A549 (cell line): ENCODE measurements at regions of chr12 and their contacts with region 1.

Region 1: GRCh38 chr12:120292661-120293531 is at the start of gene RNU4-1:
- DNase-seq: peak; percentile 59 to 96
- ATAC-seq: peak; percentile 57 to 66
- H3K4me3 ChIP-seq: peak within 1 kb of the TSS; percentile 55
- H3K27ac ChIP-seq: peak within 1 kb of the TSS; percentile 91 to 96
- H3K4me1 ChIP-seq: peaks cover 13% of the 10 kb centered on the region; the same call in 2 of the 3 replicates
- CTCF ChIP-seq: no peak; the same call in 2 of the 3 replicates
- EP300 ChIP-seq: no peak
- POLR2A ChIP-seq: peak; percentile 96
- RAD21 ChIP-seq: no peak; a peak in 1 of 5 replicates
- polyA plus RNA-seq, gene RNU4-1: not detected in 2 replicates

Region 2: DNA sequence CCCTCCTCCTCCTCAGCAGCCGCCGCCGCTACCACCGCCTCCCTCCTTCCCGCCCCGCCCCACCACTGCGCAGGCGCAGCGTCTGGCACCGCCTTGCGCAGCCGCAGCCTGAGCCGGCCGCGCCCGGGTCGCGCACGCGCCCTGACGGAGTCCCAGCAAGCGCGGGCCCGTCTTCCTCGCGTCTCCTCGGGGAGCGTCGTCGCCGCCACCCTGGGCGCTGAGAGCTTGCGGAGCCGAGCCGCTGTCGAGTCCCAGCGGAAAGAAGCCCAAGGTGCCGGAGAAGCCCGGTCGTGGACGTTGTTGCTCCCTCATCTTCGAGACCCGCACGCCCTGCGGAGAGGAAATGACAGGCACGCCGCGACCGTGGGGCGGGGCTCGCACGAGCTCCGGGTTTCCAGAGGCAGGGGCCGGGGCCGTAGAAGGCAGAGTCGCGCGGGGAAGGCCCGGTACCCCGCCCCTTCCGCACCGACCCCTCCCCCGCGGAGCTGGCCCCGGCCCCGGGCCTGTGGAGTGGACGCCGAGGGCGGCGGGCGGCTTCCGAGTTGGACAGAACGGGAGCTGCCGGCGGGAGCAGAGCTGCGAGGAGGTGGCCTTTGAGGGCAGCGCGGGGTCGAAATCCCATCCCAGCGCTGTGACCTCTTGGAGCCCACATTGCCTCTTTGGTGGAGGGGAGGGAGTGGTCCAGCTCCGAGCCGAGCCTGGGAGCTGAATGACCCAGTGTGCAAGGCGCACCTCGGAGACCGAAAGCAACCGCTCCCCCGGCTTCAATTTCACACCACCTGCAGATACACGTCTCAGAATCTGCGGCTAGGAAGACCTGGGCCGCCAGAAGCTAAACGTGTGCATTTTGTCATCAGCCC is 175.9 kb before region 1 on chr12:
- CTCF ChIA-PET with region 1: no interaction called
- POLR2A ChIA-PET with region 1: interaction called, 19 read pairs
- DNase-seq: peak; percentile 39 to 96
- ATAC-seq: peak; percentile 67 to 79
- H3K4me3 ChIP-seq: peak overlapping the region; percentile 96
- H3K27ac ChIP-seq: peak overlapping the region; percentile 95 to 97
- H3K4me1 ChIP-seq: peaks cover 33% of the 10 kb centered on the region
- CTCF ChIP-seq: no peak
- EP300 ChIP-seq: no peak
- POLR2A ChIP-seq: peak; percentile 90
- RAD21 ChIP-seq: no peak

Region 3: GRCh38 chr12:120142231-120142877 is 150.5 kb before region 1 on chr12:
- CTCF ChIA-PET with region 1: no interaction called
- POLR2A ChIA-PET with region 1: no interaction called
- DNase-seq: no peak
- ATAC-seq: peak in 1 of 2 experiments; percentile 18; a peak in 3 of 6 replicates
- H3K4me3 ChIP-seq: no peak overlapping the region
- H3K27ac ChIP-seq: no peak overlapping the region; a peak in 1 of 6 replicates
- H3K4me1 ChIP-seq: no peaks in the 10 kb centered on the region
- CTCF ChIP-seq: no peak
- EP300 ChIP-seq: no peak
- POLR2A ChIP-seq: no peak
- RAD21 ChIP-seq: no peak

Region 4: DNA sequence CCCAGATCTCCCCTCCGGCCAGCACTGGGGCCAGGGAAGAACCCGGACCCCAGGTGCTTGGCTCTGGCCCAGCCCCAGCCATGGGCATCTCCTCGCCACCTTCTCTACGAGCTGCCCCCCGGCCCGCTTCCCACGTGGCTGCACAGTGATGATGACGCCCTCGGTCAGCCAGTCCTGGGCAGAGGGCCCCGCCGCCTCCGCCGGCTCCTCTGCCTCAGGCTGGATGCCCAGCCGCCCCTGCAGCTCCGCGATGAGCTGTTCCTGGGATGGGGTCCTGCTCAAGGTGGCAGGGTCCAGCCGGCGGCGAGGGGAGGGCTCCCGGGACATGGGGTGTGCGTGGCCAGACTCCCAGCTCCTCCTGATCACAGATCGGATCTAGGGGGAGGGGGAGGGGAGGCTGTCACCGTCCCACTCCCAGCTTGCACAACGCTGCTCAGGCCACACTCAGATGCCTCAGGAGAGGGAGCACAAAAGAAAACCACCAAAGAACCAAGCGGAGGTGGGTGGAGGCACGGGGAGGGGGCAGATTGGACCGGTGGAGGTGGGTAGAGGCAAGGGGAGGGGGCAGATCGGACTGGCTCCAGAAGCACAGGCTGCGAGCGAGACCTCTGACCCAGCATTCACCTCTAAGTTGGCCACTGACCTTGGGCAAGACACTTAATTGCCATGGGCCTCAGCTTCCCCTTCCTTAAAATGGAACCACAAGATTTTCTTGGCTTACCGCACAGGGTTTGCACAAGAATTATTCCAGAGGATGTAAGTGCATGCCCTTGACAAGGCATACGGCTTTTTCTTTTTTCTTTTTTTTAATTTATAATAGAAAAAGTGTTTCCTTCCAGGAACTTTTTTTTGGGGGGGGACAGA is 75.9 kb before region 1 on chr12:
- CTCF ChIA-PET with region 1: no interaction called
- POLR2A ChIA-PET with region 1: interaction called, 13 read pairs
- DNase-seq: no peak
- ATAC-seq: no peak; a peak in 1 of 6 replicates
- H3K4me3 ChIP-seq: no peak overlapping the region
- H3K27ac ChIP-seq: no peak overlapping the region
- H3K4me1 ChIP-seq: no peaks in the 10 kb centered on the region
- CTCF ChIP-seq: no peak
- EP300 ChIP-seq: no peak
- POLR2A ChIP-seq: no peak
- RAD21 ChIP-seq: no peak

Region 5: GRCh38 chr12:120234643-120235368 is 58.1 kb before region 1 on chr12:
- CTCF ChIA-PET with region 1: interaction called, 221 read pairs
- POLR2A ChIA-PET with region 1: interaction called, 220 read pairs
- DNase-seq: peak; percentile 94 to 96
- ATAC-seq: peak; percentile 58 to 64
- H3K4me3 ChIP-seq: 0 out of 3 replicates have a peak overlapping the region, but pooled peaks have one; percentile 0
- H3K27ac ChIP-seq: peak overlapping the region; percentile 93 to 100
- H3K4me1 ChIP-seq: peaks cover 98% of the 10 kb centered on the region
- CTCF ChIP-seq: peak; percentile 39; the same call in 2 of the 3 replicates
- EP300 ChIP-seq: 0 out of 5 replicates have a peak, but pooled peaks of 1 of the 2 experiments have one; percentile 16
- POLR2A ChIP-seq: no peak
- RAD21 ChIP-seq: peak; percentile 54 to 56; a peak in 4 of 5 replicates

Region 6: DNA sequence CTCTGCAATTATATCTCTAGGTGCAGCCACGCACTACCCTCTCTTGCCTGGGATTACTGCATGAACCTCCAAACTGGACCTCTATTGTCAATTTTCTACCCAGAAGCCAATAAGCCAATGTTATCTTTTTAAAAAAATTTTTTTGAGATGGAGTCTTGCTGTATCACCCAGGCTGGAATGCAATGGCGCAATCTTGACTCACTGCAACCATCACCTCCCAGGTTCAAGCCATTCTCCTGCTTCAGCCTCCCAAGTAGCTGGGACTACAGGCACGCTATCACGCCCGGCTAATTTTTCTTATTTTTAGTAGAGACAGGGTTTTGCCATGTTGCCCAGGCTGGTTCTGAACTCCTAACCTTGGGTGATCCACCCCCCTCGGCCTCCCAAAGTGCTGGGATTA is 16.2 kb before region 1 on chr12:
- CTCF ChIA-PET with region 1: interaction called, 4 read pairs
- POLR2A ChIA-PET with region 1: interaction called, 13 read pairs
- DNase-seq: peak in 1 of 2 experiments; percentile 58
- ATAC-seq: peak in 1 of 2 experiments; percentile 52; a peak in 3 of 6 replicates
- H3K4me3 ChIP-seq: no peak overlapping the region
- H3K27ac ChIP-seq: peak overlapping the region; percentile 58 to 82
- H3K4me1 ChIP-seq: peaks cover 23% of the 10 kb centered on the region
- CTCF ChIP-seq: no peak
- EP300 ChIP-seq: no peak
- POLR2A ChIP-seq: no peak
- RAD21 ChIP-seq: no peak

Region 7: DNA sequence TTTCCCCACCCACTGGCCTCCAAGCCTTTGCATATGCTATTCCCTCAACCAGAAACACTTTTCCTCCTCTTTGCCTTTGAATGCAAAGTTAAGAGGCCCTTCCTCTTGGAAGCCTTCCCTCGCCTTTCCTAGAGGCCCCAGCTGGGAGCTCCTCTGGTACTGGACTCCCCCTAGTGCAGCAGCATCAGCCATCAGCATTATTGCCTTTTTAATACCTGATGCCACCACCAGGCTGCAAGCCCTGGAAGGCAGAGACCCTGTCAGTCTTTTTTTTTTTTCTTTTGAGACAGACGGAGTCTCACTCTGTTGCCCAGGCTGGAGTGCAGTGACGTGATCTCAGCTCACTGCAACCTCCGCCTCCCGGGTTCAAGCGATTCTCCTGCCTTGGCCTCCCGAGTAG is 53.8 kb after region 1 on chr12:
- CTCF ChIA-PET with region 1: no interaction called
- POLR2A ChIA-PET with region 1: no interaction called
- DNase-seq: peak in 1 of 2 experiments; percentile 39
- ATAC-seq: peak; percentile 52 to 79; a peak in 4 of 6 replicates
- H3K4me3 ChIP-seq: no peak overlapping the region
- H3K27ac ChIP-seq: no peak overlapping the region
- H3K4me1 ChIP-seq: peaks cover 17% of the 10 kb centered on the region
- CTCF ChIP-seq: no peak
- EP300 ChIP-seq: no peak
- POLR2A ChIP-seq: no peak
- RAD21 ChIP-seq: no peak

Region 8: GRCh38 chr12:120437754-120438494 is 145.0 kb after region 1 on chr12 and contains the start of gene COX6A1:
- CTCF ChIA-PET with region 1: no interaction called
- POLR2A ChIA-PET with region 1: interaction called, 10 read pairs
- DNase-seq: peak; percentile 99
- ATAC-seq: peak; percentile 97 to 98
- H3K4me3 ChIP-seq: peak within 1 kb of the TSS; percentile 79
- H3K27ac ChIP-seq: peak within 1 kb of the TSS; percentile 71 to 91
- H3K4me1 ChIP-seq: peaks cover 14% of the 10 kb centered on the region
- CTCF ChIP-seq: no peak
- EP300 ChIP-seq: no peak
- POLR2A ChIP-seq: peak; percentile 77
- RAD21 ChIP-seq: no peak
- polyA plus RNA-seq, gene COX6A1: 948 and 1,287 TPM in 2 replicates